PC-3 (cell line): ENCODE measurements at regions of chr1 and their contacts with region 1.

Region 1: DNA sequence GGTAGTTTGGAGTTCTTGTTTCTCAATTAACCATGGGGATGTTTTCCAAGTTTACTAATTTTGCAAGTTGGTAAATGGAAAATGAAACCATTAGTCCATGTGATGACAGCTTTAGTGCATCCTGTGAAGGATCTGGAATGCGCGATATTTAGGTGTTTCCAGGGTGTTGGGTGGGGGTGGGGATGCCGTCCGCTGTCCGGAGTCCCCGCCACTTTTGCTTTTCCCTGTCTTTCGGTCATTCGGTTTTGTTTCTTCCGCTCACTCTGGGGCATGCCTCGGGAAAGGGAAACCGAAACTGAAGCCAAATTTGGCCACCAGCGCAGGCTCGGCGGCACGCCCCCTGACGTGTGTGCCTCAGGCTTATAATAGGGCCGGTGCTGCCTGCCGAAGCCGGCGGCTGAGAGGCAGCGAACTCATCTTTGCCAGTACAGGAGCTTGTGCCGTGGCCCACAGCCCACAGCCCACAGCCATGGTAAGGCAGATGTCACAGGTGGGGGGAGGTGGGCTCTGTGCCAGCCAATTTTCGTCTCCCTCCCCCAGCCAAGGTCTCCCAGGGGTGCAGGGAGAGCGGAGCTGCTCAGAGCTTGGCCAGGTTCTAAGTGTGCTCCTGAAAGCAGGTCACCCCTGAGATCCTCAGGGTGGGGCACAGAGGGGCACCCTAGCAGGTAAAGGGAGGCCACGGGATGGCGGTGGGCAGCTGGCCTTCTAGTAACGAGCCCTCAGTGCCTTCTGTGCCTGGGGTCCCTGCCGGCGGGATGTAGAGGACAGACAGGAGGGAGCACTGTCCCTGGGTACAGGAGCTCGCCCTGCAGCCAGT is at the start of gene ISG15:
- DNase-seq: peak; percentile 97
- ATAC-seq: peak; percentile 72
- H3K4me3 ChIP-seq: peak within 1 kb of the TSS; percentile 76
- H3K27ac ChIP-seq: peak within 1 kb of the TSS; percentile 66
- H3K4me1 ChIP-seq: peaks cover 23% of the 10 kb centered on the region
- H3K27me3 ChIP-seq: no peaks in the 10 kb centered on the region
- CTCF ChIP-seq: no peak
- total RNA-seq, gene ISG15: 749 and 758 TPM in 2 replicates

Region 2: GRCh38 chr1:999725-1000356 is 13.5 kb before region 1 on chr1 and contains the start of gene HES4:
- CTCF ChIA-PET with region 1: interaction called, 4 read pairs
- POLR2A ChIA-PET with region 1: interaction called, 10 read pairs
- intact Hi-C with region 1: loop called (anchors 1 kb)
- DNase-seq: peak; percentile 97
- ATAC-seq: peak; percentile 66
- H3K4me3 ChIP-seq: peak within 1 kb of the TSS; percentile 93
- H3K27ac ChIP-seq: peak within 1 kb of the TSS; percentile 96
- H3K4me1 ChIP-seq: peaks cover 4% of the 10 kb centered on the region; the same call in 1 of the 2 replicates
- H3K27me3 ChIP-seq: no peaks in the 10 kb centered on the region
- CTCF ChIP-seq: no peak
- total RNA-seq, gene HES4: 233 and 379 TPM in 2 replicates

Region 3: DNA sequence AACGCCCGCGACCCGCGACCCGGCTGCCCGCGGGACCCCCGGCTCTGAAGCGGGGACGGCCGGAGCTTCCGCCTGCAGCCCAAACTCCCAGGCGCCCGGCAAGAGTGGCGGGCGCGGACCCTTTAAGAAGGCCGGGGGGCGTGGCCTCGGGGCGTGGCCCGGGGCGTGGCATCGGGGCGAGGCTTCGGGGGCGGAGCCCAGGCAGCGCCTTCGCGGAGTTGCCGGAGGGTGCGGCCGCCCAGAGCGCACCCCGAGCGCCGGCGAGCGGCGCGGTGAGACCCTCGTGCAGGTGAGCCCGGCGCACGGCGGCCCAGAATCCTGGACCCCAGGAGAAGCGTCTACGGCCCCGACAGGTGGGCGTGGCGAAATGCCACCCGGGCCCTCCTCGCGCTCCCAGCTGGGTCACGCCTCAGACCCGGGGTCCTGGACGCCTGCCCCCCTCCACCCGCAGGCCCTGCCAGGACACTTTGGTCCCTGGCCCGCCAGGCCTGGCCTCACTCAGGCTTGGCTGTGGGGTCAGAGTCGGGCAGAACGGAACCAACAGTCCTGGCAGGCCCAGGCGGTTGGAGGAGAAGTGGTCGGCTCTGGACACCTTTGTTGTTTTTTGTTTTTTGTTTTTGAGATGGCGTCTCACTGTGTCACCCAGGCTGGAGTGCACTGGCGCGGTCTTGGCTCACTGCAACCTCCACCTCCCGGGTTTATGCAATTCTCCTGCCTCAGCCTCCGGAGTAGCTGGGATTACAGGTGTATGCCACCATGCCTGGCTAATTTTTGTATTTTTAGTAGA is 46.4 kb after region 1 on chr1:
- CTCF ChIA-PET with region 1: interaction called, 5 read pairs
- POLR2A ChIA-PET with region 1: no interaction called
- intact Hi-C with region 1: loop called (anchors 2 kb)
- DNase-seq: peak; percentile 97
- ATAC-seq: peak; percentile 55
- H3K4me3 ChIP-seq: peak overlapping the region; percentile 85
- H3K27ac ChIP-seq: no peak overlapping the region
- H3K4me1 ChIP-seq: peaks cover 52% of the 10 kb centered on the region
- H3K27me3 ChIP-seq: no peaks in the 10 kb centered on the region
- CTCF ChIP-seq: no peak

Region 4: GRCh38 chr1:1091663-1092478 is 78.6 kb after region 1 on chr1:
- CTCF ChIA-PET with region 1: no interaction called
- POLR2A ChIA-PET with region 1: no interaction called
- intact Hi-C with region 1: no loop called
- DNase-seq: no peak
- ATAC-seq: peak; percentile 22; the same call in 1 of the 2 replicates
- H3K4me3 ChIP-seq: no peak overlapping the region
- H3K27ac ChIP-seq: no peak overlapping the region
- H3K4me1 ChIP-seq: no peaks in the 10 kb centered on the region
- H3K27me3 ChIP-seq: no peaks in the 10 kb centered on the region
- CTCF ChIP-seq: no peak

Region 5: GRCh38 chr1:1206376-1207260 is 193.3 kb after region 1 on chr1 and contains the start of gene TNFRSF18:
- CTCF ChIA-PET with region 1: no interaction called
- POLR2A ChIA-PET with region 1: no interaction called
- intact Hi-C with region 1: no loop called
- DNase-seq: peak; percentile 79
- ATAC-seq: peak; percentile 71
- H3K4me3 ChIP-seq: peak within 1 kb of the TSS; percentile 68
- H3K27ac ChIP-seq: no peak within 1 kb of the TSS
- H3K4me1 ChIP-seq: peaks cover 25% of the 10 kb centered on the region
- H3K27me3 ChIP-seq: no peaks in the 10 kb centered on the region
- CTCF ChIP-seq: peak; percentile 31; the same call in 1 of the 2 replicates
- total RNA-seq, gene TNFRSF18: 87.2 and 120 TPM in 2 replicates

Region 6: GRCh38 chr1:1250786-1251284 is 237.5 kb after region 1 on chr1:
- CTCF ChIA-PET with region 1: no interaction called
- POLR2A ChIA-PET with region 1: no interaction called
- intact Hi-C with region 1: no loop called
- DNase-seq: no peak
- ATAC-seq: no peak
- H3K4me3 ChIP-seq: no peak overlapping the region
- H3K27ac ChIP-seq: no peak overlapping the region
- H3K4me1 ChIP-seq: no peaks in the 10 kb centered on the region
- H3K27me3 ChIP-seq: no peaks in the 10 kb centered on the region
- CTCF ChIP-seq: no peak